ENCODE measurements at regions of chr18 and their contacts with region 1.

Region 1: GRCh38 chr18:59358712-59359575 is at the start of gene LMAN1:
- DNase-seq: peak; percentile 92
- H3K4me3 Mint-ChIP-seq: peak within 1 kb of the TSS; percentile 99
- H3K27ac Mint-ChIP-seq: peak within 1 kb of the TSS; percentile 100
- H3K4me1 Mint-ChIP-seq: peaks cover 27% of the 10 kb centered on the region
- H3K27me3 Mint-ChIP-seq: no peaks in the 10 kb centered on the region
- total RNA-seq, gene LMAN1: 147 and 175 TPM in 2 replicates

Region 2: DNA sequence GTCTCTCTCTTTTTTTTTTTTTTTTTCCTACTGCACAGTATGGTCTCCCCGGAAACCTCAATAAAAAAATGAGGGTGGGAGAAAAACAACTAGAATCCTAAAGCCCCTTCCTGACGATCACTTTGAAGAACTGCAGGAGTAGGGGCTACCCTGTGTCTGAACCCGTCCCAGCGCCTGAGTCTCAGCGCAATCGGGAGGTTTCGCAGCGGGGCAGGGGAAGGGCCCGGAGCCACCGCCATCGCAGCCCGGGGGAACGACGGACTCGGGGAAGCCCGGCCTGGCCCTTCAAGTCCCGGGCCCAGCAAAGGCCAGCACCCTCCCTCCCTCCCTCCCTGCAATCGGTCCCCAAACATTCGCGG is 1737.7 kb before region 1 on chr18:
- intact Hi-C with region 1: loop called (anchors 5 kb)
- DNase-seq: no peak
- H3K4me3 Mint-ChIP-seq: peak overlapping the region; percentile 85
- H3K27ac Mint-ChIP-seq: peak overlapping the region; percentile 87
- H3K4me1 Mint-ChIP-seq: peaks cover 9% of the 10 kb centered on the region
- H3K27me3 Mint-ChIP-seq: no peaks in the 10 kb centered on the region

Region 3: GRCh38 chr18:59139371-59140298 is 219.3 kb before region 1 on chr18 and contains the start of gene SEC11C:
- intact Hi-C with region 1: loop called (anchors 1 kb)
- DNase-seq: peak; percentile 96
- H3K4me3 Mint-ChIP-seq: peak within 1 kb of the TSS; percentile 94
- H3K27ac Mint-ChIP-seq: peak within 1 kb of the TSS; percentile 98
- H3K4me1 Mint-ChIP-seq: peaks cover 34% of the 10 kb centered on the region
- H3K27me3 Mint-ChIP-seq: peaks cover 19% of the 10 kb centered on the region
- total RNA-seq, gene SEC11C: 147 and 148 TPM in 2 replicates

Region 4: DNA sequence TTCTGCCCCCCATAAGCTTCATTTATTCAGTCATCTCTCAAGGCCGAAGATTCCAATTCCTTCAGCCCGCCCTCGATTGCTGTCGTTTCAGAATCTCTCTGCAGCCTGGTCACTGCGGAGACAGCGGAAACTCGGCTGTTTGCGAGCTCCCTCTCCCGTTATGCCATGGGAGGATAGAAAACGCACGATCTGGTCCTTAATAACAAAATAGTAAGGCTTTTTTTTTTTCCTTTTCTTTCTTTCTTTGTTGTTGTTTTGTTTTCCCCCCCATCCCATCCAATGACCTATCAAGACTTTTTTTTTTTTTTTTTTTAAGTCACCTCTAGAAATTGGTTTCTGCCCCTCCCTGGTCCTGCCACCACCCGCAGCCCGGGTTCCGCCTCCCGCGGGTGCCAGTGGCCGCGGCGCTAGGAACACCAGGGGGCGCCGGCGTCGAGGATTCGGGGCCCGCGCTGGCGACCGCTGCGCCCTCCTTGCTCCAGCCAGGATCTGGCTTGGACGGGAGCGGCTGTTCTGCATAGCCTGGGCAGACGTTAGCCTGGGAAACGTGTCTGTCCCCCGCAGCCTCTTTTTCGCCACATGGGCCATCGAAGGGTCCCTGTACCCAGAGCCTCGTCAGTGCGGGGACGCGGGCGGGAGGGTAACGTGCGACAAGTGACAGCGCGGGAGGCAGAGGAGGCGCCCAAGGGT is 50.6 kb before region 1 on chr18:
- intact Hi-C with region 1: loop called (anchors 2 kb)
- DNase-seq: peak; percentile 61
- H3K4me3 Mint-ChIP-seq: peak overlapping the region; percentile 63
- H3K27ac Mint-ChIP-seq: no peak overlapping the region
- H3K4me1 Mint-ChIP-seq: no peaks in the 10 kb centered on the region
- H3K27me3 Mint-ChIP-seq: peaks cover 44% of the 10 kb centered on the region

Region 5: DNA sequence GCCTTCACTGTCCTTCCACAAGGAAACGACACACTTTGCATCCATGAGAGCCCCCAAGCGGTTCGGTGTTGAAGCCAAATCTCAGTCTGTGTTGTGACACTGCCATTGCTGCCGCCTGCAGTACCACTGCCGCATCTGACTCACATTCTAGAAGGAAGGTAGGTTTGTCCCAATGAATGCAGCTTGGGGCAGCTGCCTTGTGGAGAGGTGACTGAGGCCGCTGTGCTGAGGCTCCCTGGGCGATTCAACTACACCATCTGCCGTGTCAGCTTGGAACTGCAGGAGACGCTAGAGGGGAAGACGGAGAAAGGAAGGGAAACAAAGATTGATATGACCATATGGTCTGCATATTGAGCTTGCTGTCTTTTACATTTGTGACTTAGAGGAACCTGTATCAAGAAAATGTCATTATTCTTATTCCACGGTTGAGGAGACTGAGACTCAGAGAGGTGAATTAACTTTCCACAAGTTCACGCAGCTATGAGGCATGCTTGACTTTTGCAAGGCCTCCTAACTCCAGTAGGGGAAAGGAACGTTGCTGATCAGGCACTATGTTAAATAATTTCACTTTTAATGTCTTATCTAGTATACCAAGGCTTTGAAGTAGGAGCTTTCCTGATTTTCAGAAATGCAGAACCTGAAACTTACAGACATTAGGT is 43.6 kb after region 1 on chr18:
- intact Hi-C with region 1: loop called (anchors 2 kb)
- DNase-seq: peak; percentile 59
- H3K4me3 Mint-ChIP-seq: no peak overlapping the region
- H3K27ac Mint-ChIP-seq: no peak overlapping the region
- H3K4me1 Mint-ChIP-seq: no peaks in the 10 kb centered on the region
- H3K27me3 Mint-ChIP-seq: peaks cover 5% of the 10 kb centered on the region